ENCODE measurements at regions of chr1 and their contacts with region 1.

Region 1: DNA sequence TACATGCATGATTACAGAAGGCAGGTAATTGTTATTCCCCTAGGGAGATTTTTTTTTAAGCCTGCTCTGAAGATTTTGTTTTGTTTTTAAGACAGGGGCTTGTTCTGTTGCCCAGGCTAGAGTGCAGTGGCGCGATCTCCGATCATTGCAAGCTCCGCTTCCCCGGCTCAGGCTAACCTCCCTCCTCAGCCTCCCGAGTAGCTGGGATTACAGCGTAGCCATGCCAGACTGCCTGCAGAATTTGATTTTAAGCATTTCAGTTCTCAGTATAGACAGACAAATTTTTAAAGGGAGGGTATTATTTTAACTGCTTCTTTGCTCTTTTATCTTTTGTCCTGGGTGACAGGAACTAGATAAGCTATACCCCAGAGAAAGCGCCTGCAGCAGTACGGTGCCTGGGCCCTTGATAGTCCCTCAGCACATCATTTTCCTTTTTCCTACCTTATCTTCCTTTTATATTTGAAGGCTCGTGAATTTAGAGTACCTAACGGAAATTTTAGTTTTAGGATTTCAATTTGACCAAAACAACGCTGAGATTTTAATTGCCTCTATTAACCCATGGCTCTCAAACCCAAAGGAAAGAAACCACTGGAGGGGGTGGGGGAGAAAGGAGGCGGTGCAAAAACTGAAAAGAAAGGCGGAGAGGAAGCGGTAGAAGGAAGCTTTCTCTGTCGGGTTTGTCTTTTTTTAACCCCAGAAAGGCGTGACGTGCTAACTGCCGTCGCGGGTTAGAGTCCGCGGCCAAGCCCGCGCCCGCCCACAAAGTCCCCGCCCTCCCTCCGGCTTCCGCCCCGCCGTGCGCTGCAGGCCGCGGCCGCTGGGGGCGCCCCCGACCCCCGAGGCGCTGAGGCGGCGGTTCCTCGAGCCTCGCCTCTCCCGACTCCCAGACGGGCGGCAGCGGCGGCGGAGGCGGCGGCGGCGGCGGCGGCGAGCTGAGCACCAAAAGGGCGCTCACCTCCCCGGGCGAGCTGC is at the start of gene EEIG2:
- DNase-seq: peak; percentile 87
- H3K4me3 Mint-ChIP-seq: peak within 1 kb of the TSS; percentile 95
- H3K27ac Mint-ChIP-seq: peak within 1 kb of the TSS; percentile 77
- H3K4me1 Mint-ChIP-seq: peaks cover 40% of the 10 kb centered on the region
- H3K27me3 Mint-ChIP-seq: peaks cover 4% of the 10 kb centered on the region
- total RNA-seq, gene EEIG2: 25.4 and 26.4 TPM in 2 replicates

Region 2: GRCh38 chr1:108504447-108504846 is 55.1 kb before region 1 on chr1:
- intact Hi-C with region 1: loop called (anchors 2 kb)
- DNase-seq: no peak
- H3K4me3 Mint-ChIP-seq: no peak overlapping the region
- H3K27ac Mint-ChIP-seq: no peak overlapping the region
- H3K4me1 Mint-ChIP-seq: peaks cover 2% of the 10 kb centered on the region
- H3K27me3 Mint-ChIP-seq: peaks cover 38% of the 10 kb centered on the region

Region 3: DNA sequence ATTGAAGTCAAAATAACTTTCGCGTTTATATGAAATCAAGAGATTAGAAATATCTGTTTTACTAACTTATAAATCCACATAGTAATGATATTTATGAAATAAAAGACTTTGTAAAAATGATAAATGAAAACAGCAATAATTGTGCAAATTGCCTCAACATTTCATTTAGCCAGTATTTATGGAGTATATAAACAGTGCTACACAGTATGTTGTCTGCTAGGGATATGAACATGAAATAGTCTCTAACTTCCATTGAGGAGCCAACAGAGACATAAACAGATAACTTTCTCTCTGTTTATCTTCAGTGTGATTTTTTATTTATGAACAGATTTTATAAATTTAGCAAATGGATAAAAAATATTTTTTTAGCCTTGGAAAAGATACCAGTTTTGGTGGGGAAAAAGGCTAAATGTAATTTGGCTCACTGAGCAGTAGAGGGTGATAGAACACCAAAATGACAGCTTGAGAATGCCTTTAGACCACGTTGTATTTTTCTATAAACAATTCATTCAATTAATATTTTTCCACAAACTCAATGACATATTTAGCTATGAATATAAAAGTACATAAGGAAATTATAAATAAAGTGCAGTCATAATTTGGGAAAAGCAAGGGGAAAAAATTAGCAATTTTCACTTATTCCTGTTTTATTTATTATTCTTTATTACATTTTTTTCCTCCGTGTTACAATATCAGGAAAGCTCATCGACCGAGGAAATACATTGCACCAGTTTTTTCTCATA is 47.1 kb before region 1 on chr1:
- intact Hi-C with region 1: loop called (anchors 1 kb)
- DNase-seq: no peak
- H3K4me3 Mint-ChIP-seq: no peak overlapping the region
- H3K27ac Mint-ChIP-seq: no peak overlapping the region
- H3K4me1 Mint-ChIP-seq: peaks cover 7% of the 10 kb centered on the region
- H3K27me3 Mint-ChIP-seq: peaks cover 36% of the 10 kb centered on the region

Region 4: DNA sequence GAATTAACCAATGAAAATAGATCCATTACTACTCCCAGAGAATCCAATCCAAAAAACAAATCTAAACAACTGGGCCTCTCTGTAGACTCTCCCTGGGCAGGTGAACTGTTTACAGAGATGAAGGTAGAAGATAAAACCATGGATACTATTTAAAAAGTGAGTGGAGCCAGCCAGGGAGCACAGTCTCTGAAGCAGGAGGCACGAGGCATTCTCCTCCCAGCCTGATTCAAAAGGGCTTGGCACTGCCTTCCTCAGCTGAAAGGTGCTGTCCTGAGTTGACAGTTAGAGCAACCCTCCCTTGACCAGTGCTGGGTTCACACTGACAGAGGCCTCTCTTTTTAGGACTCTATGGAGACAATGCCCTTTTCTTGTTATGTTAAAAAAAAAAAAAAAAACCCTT is 64.6 kb after region 1 on chr1:
- intact Hi-C with region 1: no loop called
- DNase-seq: no peak
- H3K4me3 Mint-ChIP-seq: no peak overlapping the region
- H3K27ac Mint-ChIP-seq: no peak overlapping the region
- H3K4me1 Mint-ChIP-seq: peaks cover 1% of the 10 kb centered on the region
- H3K27me3 Mint-ChIP-seq: no peaks in the 10 kb centered on the region